Dendritic cell treated with granulocyte-macrophage colony-stimulating factor and Interleukin-4, amounts not matched to agents 40 ng/mL and 50 ng/mL, for 4 days (primary cell): ENCODE measurements at regions of chrX and their contacts with region 1.

Region 1: GRCh38 chrX:139932901-139933796 is at the start of gene ATP11C:
- H3K4me3 Mint-ChIP-seq: peak within 1 kb of the TSS; percentile 80
- H3K27ac Mint-ChIP-seq: peak within 1 kb of the TSS; percentile 91
- H3K4me1 Mint-ChIP-seq: peaks cover 16% of the 10 kb centered on the region
- H3K27me3 Mint-ChIP-seq: no peaks in the 10 kb centered on the region

Region 2: GRCh38 chrX:139600105-139600504 is 333.0 kb before region 1 on chrX:
- intact Hi-C with region 1: no loop called
- H3K4me3 Mint-ChIP-seq: no peak overlapping the region
- H3K27ac Mint-ChIP-seq: no peak overlapping the region
- H3K4me1 Mint-ChIP-seq: no peaks in the 10 kb centered on the region
- H3K27me3 Mint-ChIP-seq: no peaks in the 10 kb centered on the region

Region 3: DNA sequence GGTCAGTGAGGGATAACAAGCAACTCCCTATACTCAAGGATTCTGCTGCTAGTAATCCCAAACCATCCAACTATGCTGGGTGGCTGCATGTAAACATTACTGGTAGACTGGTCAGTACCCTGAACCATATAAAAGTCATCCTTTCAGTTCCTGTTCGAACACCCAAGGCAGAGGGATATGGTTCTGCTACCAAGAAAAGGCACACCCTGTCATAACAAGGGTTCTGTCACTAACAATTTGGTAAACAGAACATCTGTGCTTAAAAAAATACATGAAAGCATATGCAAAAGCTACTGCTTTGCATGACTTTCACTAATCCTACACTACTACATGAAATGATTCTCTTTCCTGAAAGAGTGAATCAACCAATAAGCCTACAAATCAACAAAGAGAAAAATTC is 148.3 kb before region 1 on chrX:
- intact Hi-C with region 1: loop called (anchors 5 kb)
- H3K4me3 Mint-ChIP-seq: no peak overlapping the region
- H3K27ac Mint-ChIP-seq: peak overlapping the region; percentile 35
- H3K4me1 Mint-ChIP-seq: peaks cover 14% of the 10 kb centered on the region
- H3K27me3 Mint-ChIP-seq: no peaks in the 10 kb centered on the region

Region 4: GRCh38 chrX:139890991-139891700 is 42.0 kb before region 1 on chrX:
- intact Hi-C with region 1: loop called (anchors 5 kb)
- H3K4me3 Mint-ChIP-seq: no peak overlapping the region
- H3K27ac Mint-ChIP-seq: no peak overlapping the region
- H3K4me1 Mint-ChIP-seq: peaks cover 24% of the 10 kb centered on the region
- H3K27me3 Mint-ChIP-seq: no peaks in the 10 kb centered on the region